Sciatic nerve (tissue), 2 donors: ENCODE measurements at regions of chr15 and their contacts with region 1.

Region 1: DNA sequence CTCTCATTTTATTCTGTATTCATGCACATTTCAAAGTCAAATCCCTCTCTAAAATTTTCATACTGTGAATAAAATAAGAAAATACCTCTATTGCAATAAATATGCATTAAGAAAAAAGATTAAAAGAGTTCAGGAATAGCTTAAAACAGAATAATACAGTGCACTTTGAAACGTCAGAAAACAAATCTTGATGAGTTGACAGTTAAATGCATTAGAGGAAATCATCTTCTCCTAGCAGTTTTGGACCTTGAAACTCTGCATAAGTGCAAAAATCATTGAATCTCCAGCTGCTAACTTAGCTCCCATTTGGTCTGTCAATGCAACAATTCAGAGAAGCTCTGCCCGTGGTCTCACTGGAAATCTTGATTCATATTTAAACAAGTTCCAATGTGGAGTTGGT is 99.0 kb upstream of the ARRDC4 start:
- DNase-seq: no peak
- ATAC-seq: no peak

Region 2: DNA sequence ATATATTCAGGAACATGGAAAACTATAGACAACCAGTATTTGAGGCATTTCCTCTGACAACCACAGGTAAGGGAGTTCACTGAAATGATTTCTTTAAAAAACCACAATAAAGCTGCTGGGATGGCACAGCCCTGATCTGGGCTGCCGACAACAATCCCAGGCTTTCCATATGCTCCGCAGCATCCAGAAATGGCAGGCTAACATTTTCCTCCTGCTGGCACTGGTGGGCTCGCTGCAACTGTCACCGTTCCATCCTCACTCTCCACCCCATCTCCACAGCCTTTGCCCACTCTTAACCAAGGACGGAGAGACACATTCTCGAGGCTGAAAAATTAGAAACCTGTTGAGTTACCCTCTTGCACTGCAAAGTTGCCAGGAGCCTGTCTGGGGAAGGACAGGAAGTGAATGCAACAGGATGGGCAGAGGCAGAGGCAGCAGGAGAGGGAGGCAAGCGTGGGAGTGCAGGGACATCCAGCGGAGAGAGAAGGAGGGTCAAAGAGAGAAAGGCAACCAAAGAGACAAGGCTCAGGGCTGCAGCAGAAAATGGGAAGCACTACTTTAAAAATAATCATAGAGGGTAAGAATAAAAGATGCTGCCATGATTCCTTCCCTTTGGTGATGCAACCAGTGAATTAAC is 19.9 kb after region 1 on chr15:
- intact Hi-C with region 1: loop called (anchors 1 kb)
- DNase-seq: no peak
- ATAC-seq: no peak

Region 3: GRCh38 chr15:99651023-99651807 is 1789.7 kb after region 1 on chr15:
- intact Hi-C with region 1: no loop called
- DNase-seq: no peak
- ATAC-seq: no peak